Posterior vena cava (tissue), 2 donors: ENCODE measurements at regions of chr7 and their contacts with region 1.

Region 1: DNA sequence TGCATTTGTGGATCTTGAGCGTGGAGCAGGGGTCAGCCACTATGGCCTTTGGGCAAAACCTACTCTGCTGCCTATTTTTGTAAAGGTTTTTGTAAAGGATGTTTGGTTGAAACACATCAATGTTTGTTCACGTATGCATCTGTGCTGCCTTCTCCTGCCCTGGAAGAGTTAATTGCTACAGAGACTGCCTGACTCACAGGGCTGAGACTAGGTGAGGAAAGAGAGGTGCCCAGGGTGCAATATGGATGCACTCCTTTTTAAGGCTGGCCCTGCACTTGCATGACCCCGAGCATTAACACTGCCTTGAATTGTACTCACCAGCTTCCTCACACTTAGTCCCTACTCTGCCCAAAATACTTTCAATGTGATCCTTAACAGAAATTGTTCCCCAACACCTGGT is 20.9 kb upstream of the NAMPT start:
- DNase-seq: no peak

Region 2: DNA sequence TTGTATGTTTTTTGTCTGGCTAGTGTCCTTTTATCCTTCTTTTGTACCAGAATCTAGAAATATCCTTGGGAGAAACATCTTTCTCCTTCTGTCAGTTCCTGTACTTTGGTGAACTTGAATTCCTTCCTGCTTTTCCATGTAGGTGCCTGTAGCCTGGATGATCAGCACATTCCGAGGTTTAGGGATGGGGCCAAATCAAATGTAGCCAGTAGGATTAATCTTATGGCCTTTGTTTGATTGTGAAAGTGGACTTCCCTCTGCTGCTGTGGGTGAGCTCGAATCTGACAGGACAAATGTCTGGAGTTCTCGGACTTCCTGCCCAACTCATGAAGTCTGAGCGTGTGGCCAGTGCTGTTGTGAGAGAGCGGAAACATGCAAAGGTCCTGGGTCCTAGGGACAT is 12.2 kb after region 1 on chr7:
- intact Hi-C with region 1: loop called in 1 of 2 experiments (anchors 2 kb)
- DNase-seq: no peak